ENCODE measurements at regions of chr9 and their contacts with region 1.

Region 1: GRCh38 chr9:86354011-86354817 is at the start of gene TUT7:
- DNase-seq: peak; percentile 98
- H3K4me3 ChIP-seq: peak within 1 kb of the TSS; percentile 60 to 99 (median 80)
- H3K27ac ChIP-seq: peak within 1 kb of the TSS; percentile 74
- H3K4me1 ChIP-seq: peaks cover 30% of the 10 kb centered on the region
- H3K27me3 ChIP-seq: no peaks in the 10 kb centered on the region
- CTCF ChIP-seq: no peak
- total RNA-seq, gene TUT7: 33.8 to 36.4 TPM

Region 2: DNA sequence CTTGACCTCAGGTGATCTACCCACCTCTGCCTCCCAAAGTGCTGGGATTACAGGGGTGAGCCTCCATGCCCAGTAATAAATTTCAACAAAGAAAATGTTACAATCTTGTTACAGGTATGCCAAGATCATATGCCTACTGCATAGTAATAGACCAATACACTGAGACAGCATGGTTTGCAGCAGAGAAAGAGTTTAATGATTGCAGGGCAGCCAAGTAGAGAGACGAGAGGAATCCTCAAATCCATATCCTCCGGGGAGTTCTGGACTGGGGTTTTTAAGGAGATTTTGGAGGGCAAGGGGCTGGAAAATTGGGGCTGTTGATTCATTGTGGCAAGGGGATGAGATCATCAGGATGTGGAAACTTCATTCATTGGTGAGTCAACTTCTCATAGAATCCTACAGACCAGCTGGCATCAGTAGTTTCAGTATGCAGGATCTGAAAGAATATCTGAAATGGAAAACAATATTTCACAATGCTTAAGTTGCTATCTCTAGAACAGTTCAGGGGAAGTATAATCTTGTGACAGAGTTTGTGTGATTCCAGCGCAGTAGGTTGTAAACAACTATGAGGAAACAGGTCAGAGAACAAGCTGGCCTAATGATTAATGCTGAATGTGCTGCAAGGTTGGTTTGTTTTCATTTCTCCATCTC is 14.8 kb after region 1 on chr9:
- CTCF ChIA-PET with region 1: no interaction called
- dilution Hi-C with region 1: no loop called
- in situ Hi-C with region 1: no loop called
- intact Hi-C with region 1: loop called (anchors 1 kb)
- DNase-seq: peak; percentile 97
- H3K4me3 ChIP-seq: no peak overlapping the region
- H3K27ac ChIP-seq: peak overlapping the region; percentile 57
- H3K4me1 ChIP-seq: peaks cover 13% of the 10 kb centered on the region
- H3K27me3 ChIP-seq: no peaks in the 10 kb centered on the region
- CTCF ChIP-seq: no peak

Region 3: DNA sequence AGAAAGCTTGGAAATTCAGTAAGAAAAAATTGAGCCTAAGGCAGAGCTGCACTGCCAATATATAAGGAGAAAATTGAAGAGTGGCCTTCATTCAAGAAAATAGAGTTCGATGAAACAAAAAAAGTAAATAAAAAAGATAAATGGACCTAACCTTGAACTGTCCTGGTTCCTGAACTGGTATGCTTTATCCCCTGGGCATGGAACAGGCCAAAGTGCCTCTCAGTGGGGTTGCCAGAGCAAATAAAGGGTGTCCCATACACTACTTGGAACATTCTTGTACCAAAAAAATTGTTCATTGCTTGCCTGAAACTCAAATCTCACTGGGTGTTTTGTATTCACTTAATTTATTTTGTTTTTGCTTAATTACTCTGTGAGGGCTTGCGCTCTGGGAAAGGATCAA is 42.2 kb after region 1 on chr9:
- CTCF ChIA-PET with region 1: no interaction called
- dilution Hi-C with region 1: no loop called
- in situ Hi-C with region 1: no loop called
- intact Hi-C with region 1: loop called (anchors 2 kb)
- DNase-seq: no peak
- H3K4me3 ChIP-seq: no peak overlapping the region
- H3K27ac ChIP-seq: no peak overlapping the region
- H3K4me1 ChIP-seq: peaks cover 5% of the 10 kb centered on the region
- H3K27me3 ChIP-seq: no peaks in the 10 kb centered on the region
- CTCF ChIP-seq: no peak

Region 4: GRCh38 chr9:86405926-86406325 is 51.7 kb after region 1 on chr9:
- CTCF ChIA-PET with region 1: interaction called, 6 read pairs
- dilution Hi-C with region 1: no loop called
- in situ Hi-C with region 1: no loop called
- intact Hi-C with region 1: loop called (anchors 1 kb)
- DNase-seq: peak; percentile 96
- H3K4me3 ChIP-seq: peak overlapping the region; percentile 4 to 15 (median 14)
- H3K27ac ChIP-seq: peak overlapping the region; percentile 93
- H3K4me1 ChIP-seq: peaks cover 34% of the 10 kb centered on the region
- H3K27me3 ChIP-seq: no peaks in the 10 kb centered on the region
- CTCF ChIP-seq: no peak